ENCODE measurements at regions of chr15 and their contacts with region 1.

Region 1: GRCh38 chr15:40906091-40906990 is 12.1 kb downstream of the VPS18 start:
- H3K4me3 ChIP-seq: peak overlapping the region; percentile 30
- H3K27ac ChIP-seq: 0 out of 2 replicates have a peak overlapping the region, but pooled peaks have one; percentile 37
- H3K4me1 ChIP-seq: peaks cover 2% of the 10 kb centered on the region; the same call in 1 of the 2 replicates
- CTCF ChIP-seq: peak; percentile 88

Region 2: GRCh38 chr15:40893733-40894688 is 12.3 kb before region 1 on chr15 and contains the start of gene VPS18:
- CTCF ChIA-PET with region 1: interaction called, 20 read pairs
- POLR2A ChIA-PET with region 1: interaction called, 12 read pairs
- H3K4me3 ChIP-seq: peak within 1 kb of the TSS; percentile 79
- H3K27ac ChIP-seq: peak within 1 kb of the TSS; percentile 41; the same call in 1 of the 2 replicates
- H3K4me1 ChIP-seq: no peaks in the 10 kb centered on the region
- CTCF ChIP-seq: peak; percentile 81

Region 3: DNA sequence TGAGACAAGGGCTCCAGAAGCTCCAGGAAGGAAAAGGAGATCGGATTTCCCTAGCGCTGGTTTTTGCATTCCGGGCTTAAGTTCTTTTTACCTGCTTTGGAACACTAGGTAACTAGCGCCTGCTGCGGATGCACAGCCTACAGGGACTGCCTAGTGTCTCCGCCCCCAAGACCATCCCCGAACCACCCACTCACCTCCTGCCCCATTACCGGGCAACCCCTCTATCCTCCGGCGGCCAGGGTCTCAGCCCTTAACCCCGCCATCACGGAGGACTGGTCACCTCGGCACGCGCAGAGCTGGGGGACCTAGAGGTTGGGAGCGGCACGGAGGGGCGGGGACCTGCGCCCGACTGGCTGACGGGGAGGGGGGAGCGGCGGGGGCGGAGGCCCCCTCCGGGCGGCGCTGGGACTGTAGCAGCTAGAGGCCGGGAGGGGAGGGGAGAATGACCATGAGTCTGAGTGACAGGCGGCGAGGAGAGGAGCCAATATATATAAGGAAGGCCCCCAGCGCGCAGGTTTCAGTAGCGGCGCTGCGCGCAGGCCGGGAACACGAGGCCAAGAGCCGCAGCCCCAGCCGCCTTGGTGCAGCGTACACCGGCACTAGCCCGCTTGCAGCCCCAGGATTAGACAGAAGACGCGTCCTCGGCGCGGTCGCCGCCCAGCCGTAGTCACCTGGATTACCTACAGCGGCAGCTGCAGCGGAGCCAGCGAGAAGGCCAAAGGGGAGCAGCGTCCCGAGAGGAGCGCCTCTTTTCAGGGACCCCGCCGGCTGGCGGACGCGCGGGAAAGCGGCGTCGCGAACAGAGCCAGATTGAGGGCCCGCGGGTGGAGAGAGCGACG is 22.7 kb after region 1 on chr15 and contains the start of gene DLL4:
- CTCF ChIA-PET with region 1: interaction called, 32 read pairs
- POLR2A ChIA-PET with region 1: interaction called, 11 read pairs
- H3K4me3 ChIP-seq: peak within 1 kb of the TSS; percentile 49
- H3K27ac ChIP-seq: peak within 1 kb of the TSS; percentile 20; the same call in 1 of the 2 replicates
- H3K4me1 ChIP-seq: no peaks in the 10 kb centered on the region
- CTCF ChIP-seq: no peak; the same call in 1 of the 2 replicates

Region 4: DNA sequence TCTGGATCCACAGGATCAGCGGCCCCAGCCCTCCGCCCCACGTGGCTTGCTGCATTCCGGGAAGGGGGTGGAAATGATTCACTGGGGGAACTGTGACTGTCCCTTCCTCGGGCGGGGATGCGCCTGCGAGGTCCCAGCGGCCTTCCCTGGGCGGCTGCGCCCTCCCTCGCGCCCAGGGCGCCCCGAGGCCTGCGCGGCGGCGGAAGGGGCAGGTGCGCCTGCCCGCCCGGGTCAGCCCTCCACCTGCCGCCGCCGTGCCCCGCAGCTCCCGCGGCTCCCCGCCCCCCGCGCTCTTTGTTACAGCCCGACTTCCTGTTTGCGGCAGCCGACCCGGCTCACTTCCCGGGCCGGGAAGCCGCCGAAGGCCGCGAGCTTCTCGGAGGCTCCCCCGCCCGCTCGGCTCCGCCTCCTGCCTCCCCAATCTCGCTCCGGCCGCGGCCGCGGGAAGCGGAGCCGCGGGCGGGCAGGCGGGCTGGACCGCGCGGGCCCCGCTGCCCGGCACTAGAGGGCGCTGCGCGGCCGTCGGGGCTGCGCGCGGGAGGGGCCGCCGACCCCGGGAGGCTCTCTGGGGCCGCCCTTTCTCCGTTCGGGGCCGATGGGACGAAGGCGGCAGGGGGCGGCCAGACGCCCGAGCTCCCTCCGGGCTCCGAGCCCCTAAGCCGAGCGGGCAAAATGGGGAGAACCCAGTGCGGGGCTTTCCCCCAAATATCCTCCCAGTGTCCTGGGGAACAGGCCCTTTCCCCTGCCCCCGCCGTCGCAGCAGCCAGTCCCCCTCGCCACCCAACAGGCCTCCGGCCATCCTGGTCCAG is 35.4 kb after region 1 on chr15:
- CTCF ChIA-PET with region 1: interaction called, 12 read pairs
- POLR2A ChIA-PET with region 1: interaction called, 4 read pairs
- H3K4me3 ChIP-seq: peak overlapping the region; percentile 41
- H3K27ac ChIP-seq: peak overlapping the region; percentile 73; the same call in 1 of the 2 replicates
- H3K4me1 ChIP-seq: peaks cover 4% of the 10 kb centered on the region; the same call in 1 of the 2 replicates
- CTCF ChIP-seq: peak; percentile 22; the same call in 1 of the 2 replicates

Region 5: DNA sequence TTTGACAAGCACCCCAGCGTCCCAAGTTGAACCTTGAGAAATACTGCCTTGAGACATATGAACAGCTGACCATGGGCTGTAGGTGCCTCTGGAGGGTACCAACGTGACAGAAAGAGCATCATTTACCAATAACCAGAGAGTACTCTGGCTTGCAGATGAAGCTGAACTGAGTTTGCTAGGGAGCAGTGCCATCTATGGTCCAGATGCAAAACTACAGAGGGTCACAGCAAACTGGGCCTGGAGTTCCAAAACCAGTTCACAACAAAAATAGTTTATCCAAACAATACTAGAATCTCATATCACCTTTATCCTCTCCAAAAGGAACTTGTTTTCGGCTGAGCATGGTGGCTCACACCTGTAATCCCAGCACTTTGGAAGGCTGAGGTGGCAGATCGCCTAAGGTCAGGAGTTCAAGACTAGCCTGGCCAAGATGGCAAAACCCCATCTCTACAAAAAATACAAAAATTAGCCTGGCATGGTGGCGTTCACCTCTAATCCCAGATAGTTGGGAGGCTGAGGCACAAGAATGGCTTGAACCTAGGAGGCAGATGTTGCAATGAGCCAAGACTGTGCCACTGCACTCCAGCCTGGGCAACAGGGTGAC is 116.2 kb after region 1 on chr15:
- CTCF ChIA-PET with region 1: interaction called, 71 read pairs
- POLR2A ChIA-PET with region 1: no interaction called
- H3K4me3 ChIP-seq: no peak overlapping the region
- H3K27ac ChIP-seq: no peak overlapping the region
- H3K4me1 ChIP-seq: no peaks in the 10 kb centered on the region
- CTCF ChIP-seq: peak; percentile 31; the same call in 1 of the 2 replicates